BJ (cell line): ENCODE measurements at regions of chr17 and their contacts with region 1.

Region 1: GRCh38 chr17:56860551-56860950 is 26.6 kb downstream of the DGKE start:
- DNase-seq: no peak
- H3K4me3 ChIP-seq: no peak overlapping the region
- H3K27me3 ChIP-seq: no peaks in the 10 kb centered on the region
- CTCF ChIP-seq: no peak

Region 2: DNA sequence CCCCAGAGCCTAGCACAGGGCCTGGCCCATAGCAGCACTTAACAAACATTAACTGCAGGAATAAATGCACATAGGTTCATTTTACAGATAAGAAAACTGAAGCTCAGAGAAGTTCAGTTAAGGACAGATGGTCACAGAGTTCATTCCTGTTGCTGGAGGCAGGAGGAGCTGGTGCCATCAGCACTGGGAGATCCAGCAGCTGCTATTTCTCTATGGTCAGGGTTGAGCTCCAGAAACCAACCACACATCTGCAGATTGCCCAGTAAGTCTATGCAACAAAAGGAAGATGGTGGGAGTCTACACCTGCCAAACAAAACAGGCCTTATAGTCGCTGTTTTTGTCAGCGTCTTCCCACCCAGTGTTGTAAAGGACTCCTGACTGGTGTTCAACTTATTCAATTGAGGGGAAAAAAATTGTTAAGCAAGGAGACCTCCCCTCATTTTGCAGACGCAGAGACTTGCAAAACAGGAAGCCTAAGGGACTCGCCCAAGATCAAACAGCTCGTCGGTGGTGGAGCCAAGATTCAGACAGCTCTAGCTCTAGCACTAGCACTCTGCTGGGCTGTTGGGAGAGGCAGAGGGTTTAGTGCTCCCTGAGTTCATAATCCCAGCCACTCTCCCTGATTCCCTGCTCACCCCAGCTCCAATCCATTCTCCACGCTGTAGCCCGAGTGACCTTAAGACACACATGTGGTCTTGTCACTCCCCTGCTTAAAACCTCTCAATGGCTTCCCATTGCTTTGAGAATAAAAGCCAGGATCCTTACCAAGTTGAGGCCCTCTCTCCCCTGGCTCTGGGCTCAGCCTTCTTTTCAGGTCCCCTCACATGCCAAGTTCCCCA is 258.0 kb before region 1 on chr17:
- CTCF ChIA-PET with region 1: no interaction called
- POLR2A ChIA-PET with region 1: no interaction called
- DNase-seq: no peak
- H3K4me3 ChIP-seq: no peak overlapping the region
- H3K27me3 ChIP-seq: peaks cover 5% of the 10 kb centered on the region; the same call in 1 of the 2 replicates
- CTCF ChIP-seq: no peak

Region 3: DNA sequence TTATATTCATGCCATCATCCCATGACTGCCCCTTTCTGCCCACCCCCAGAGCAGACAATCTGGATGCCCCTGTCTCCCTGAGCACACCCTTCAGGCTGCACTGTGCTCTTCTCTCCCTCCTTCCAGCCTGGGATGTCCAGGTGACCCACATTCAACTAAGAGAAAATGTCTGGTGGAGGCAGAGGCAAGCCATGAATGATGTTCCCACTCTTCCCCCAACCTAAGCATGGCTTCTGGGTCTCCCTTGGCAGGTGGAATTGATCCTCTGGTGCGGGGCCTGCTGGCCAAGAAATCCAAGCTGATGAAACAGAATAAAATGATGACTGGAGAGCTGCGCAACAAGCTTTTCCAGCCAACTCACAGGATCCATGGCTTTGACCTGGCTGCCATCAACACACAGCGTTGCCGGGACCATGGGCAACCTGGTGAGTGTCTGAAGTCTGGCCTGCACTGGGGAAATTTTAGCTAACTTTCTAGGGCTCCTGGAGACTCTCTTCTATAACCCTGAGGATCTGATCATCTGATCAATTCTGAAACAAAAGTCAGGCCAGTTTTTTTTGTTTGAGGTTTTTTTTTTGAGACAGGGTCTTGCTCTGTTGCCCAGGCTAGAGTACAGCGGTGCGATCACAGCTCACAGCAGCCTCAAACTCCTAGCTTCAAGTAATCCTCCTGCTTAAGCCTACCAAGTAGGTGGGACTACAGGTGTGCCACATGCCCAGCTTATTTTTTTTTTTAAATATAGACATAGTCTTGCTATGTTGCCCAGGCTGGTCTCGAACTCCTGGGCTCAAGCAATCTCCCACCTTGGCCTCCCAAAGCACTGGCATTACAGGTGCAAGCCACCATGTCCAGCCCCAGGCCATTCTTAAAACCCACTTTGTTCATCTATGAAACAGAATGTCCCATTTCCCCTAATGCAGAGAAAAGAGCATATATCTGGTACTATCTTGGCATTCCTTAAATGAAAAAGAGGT is 1405.6 kb after region 1 on chr17:
- CTCF ChIA-PET with region 1: no interaction called
- POLR2A ChIA-PET with region 1: interaction called, 14 read pairs
- DNase-seq: no peak
- H3K4me3 ChIP-seq: no peak overlapping the region
- H3K27me3 ChIP-seq: peaks cover 1% of the 10 kb centered on the region; the same call in 1 of the 2 replicates
- CTCF ChIP-seq: no peak